ENCODE measurements at regions of chr6 and their contacts with region 1.

Region 1: GRCh38 chr6:144215932-144216667 is 65.8 kb downstream of the STX11 start:
- DNase-seq: peak; percentile 98
- H3K4me3 ChIP-seq: peak overlapping the region; percentile 55 to 80 (median 66)
- H3K27ac ChIP-seq: peak overlapping the region; percentile 96 to 99 (median 97)
- H3K4me1 ChIP-seq: peaks cover 15 to 43% (median 27%) of the 10 kb centered on the region in 6 donors
- H3K27me3 ChIP-seq: no peaks in the 10 kb centered on the region
- CTCF ChIP-seq: peak in 10 of 11 experiments; percentile 60 to 87 (median 78)
- POLR2A ChIP-seq: no peak

Region 2: GRCh38 chr6:144104898-144105487 is 111.1 kb before region 1 on chr6:
- intact Hi-C with region 1: loop called (anchors 5 kb)
- DNase-seq: no peak
- H3K4me3 ChIP-seq: no peak overlapping the region
- H3K27ac ChIP-seq: no peak overlapping the region
- H3K4me1 ChIP-seq: peaks cover 0 to 8% (median 0%) of the 10 kb centered on the region in 6 donors
- H3K27me3 ChIP-seq: no peaks in the 10 kb centered on the region
- CTCF ChIP-seq: peak; percentile 35 to 83 (median 69)
- POLR2A ChIP-seq: no peak

Region 3: GRCh38 chr6:144149891-144150709 is 66.0 kb before region 1 on chr6 and contains the start of gene STX11:
- intact Hi-C with region 1: loop called (anchors 10 kb)
- DNase-seq: peak; percentile 95
- H3K4me3 ChIP-seq: peak within 1 kb of the TSS; percentile 32 to 91 (median 82)
- H3K27ac ChIP-seq: peak within 1 kb of the TSS; percentile 87 to 97 (median 94)
- H3K4me1 ChIP-seq: peaks cover 0 to 52% (median 44%) of the 10 kb centered on the region in 6 donors
- H3K27me3 ChIP-seq: no peaks in the 10 kb centered on the region
- CTCF ChIP-seq: peak in 2 of 11 experiments; percentile 1 to 18
- POLR2A ChIP-seq: peak in 2 of 3 donors; percentile 25 to 57
- total RNA-seq, gene STX11: 34.8 to 76.0 (median 52.0) TPM